WTC11 (cell line): ENCODE measurements at regions of chr2 and their contacts with region 1.

Region 1: GRCh38 chr2:146143971-146144370 is 1624.1 kb upstream of the ZEB2 start:
- DNase-seq: no peak
- ATAC-seq: no peak
- H3K4me3 Mint-ChIP-seq: no peak overlapping the region
- H3K27ac Mint-ChIP-seq: no peak overlapping the region
- H3K4me1 Mint-ChIP-seq: 0 out of 2 replicates have a peak, but pooled peaks cover 2% of the 10 kb centered on the region
- H3K27me3 Mint-ChIP-seq: no peaks in the 10 kb centered on the region
- CTCF ChIP-seq: no peak

Region 2: DNA sequence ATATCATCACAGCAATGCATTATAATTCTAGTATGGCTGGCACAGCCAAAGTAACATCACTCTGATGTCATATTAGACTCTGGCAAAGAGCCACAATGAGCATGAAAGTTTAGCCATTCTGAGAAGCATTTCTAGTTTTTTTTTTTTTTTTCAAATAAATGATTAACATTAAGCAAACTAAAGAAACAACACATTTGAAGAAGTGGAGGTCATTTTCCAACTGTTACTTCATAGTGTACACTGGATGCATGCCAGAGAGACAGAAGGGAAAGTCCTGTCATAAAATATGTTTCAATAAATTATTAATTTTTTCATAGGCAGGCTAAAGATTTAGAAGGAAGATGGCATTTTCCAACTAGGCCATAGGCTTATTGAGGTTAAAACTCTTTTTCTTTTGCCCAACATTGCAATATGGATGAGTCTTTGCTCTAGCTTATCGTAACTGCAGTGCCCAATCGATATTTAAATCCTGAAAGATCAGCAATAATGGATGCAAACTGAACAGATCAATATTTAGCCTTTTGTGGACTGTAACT is 70.5 kb after region 1 on chr2:
- CTCF ChIA-PET with region 1: no interaction called
- POLR2A ChIA-PET with region 1: no interaction called
- DNase-seq: no peak
- ATAC-seq: no peak
- H3K4me3 Mint-ChIP-seq: no peak overlapping the region
- H3K27ac Mint-ChIP-seq: no peak overlapping the region
- H3K4me1 Mint-ChIP-seq: no peaks in the 10 kb centered on the region
- H3K27me3 Mint-ChIP-seq: no peaks in the 10 kb centered on the region
- CTCF ChIP-seq: no peak

Region 3: GRCh38 chr2:146457221-146457620 is 313.2 kb after region 1 on chr2:
- CTCF ChIA-PET with region 1: no interaction called
- POLR2A ChIA-PET with region 1: interaction called, 11 read pairs
- DNase-seq: no peak
- ATAC-seq: no peak
- H3K4me3 Mint-ChIP-seq: no peak overlapping the region
- H3K27ac Mint-ChIP-seq: no peak overlapping the region
- H3K4me1 Mint-ChIP-seq: no peaks in the 10 kb centered on the region
- H3K27me3 Mint-ChIP-seq: no peaks in the 10 kb centered on the region
- CTCF ChIP-seq: no peak